ENCODE measurements at regions of chr19 and their contacts with region 1.

Region 1: DNA sequence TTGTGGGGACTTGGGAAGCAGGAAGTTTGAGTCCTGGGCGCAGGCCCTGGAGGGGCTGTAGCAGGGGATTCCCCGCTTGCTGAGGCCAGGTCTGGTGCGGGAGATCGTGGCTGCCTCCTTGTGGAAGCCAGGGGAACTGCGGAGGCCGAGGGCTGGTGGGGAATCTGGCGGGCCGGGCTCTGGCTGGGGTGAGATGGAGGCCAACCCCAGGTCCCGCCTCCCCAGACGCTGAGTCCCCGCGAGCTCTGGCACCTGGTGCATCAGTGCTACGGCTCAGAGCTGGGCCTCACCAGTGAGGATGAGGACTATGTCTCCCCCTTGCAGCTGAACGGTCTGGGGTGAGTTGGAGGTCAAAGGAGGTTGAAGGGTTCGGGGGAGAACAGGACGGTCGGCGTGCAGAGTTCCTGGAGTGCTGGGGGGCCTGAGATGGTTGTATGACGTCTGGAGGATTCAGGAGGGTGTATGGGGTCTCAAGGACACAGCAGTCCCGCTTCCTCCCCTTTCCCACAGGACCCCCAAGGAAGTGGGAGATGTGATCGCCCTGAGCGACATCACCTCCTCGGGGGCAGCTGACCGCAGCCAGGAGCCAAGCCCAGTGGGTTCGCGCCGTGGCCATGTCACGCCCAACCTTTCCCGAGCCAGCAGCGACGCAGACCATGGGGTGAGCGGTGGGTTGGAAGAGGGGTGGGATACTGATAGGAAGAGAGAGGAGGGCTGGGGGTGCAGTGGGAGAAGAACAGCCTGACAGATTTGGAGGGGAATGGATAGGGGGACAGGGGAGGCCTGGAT is 13.1 kb downstream of the GRAMD1A start:
- DNase-seq: peak; percentile 74 to 91 (median 82)
- ATAC-seq: peak; percentile 82
- H3K4me3 ChIP-seq: peak overlapping the region; percentile 48
- H3K4me3 Mint-ChIP-seq: peak overlapping the region; percentile 87
- H3K27ac ChIP-seq: peak overlapping the region; percentile 79 to 87
- H3K27ac Mint-ChIP-seq: peak overlapping the region; percentile 91
- H3K4me1 ChIP-seq: peaks cover 82% of the 10 kb centered on the region
- H3K4me1 Mint-ChIP-seq: peaks cover 73% of the 10 kb centered on the region
- H3K27me3 ChIP-seq: no peaks in the 10 kb centered on the region
- H3K27me3 Mint-ChIP-seq: no peaks in the 10 kb centered on the region
- CTCF ChIP-seq: peak; percentile 94

Region 2: GRCh38 chr19:34733826-34734600 is 279.2 kb before region 1 on chr19 and contains the start of gene ZNF181:
- CTCF ChIA-PET with region 1: no interaction called
- POLR2A ChIA-PET with region 1: interaction called, 5 read pairs
- intact Hi-C with region 1: loop called in 1 of 2 experiments (anchors 5 kb)
- DNase-seq: peak; percentile 64 to 90 (median 74)
- ATAC-seq: peak; percentile 84
- H3K4me3 ChIP-seq: peak within 1 kb of the TSS; percentile 85
- H3K4me3 Mint-ChIP-seq: peak within 1 kb of the TSS; percentile 96
- H3K27ac ChIP-seq: peak within 1 kb of the TSS; percentile 91
- H3K27ac Mint-ChIP-seq: peak within 1 kb of the TSS; percentile 92
- H3K4me1 ChIP-seq: peaks cover 28% of the 10 kb centered on the region
- H3K4me1 Mint-ChIP-seq: peaks cover 34% of the 10 kb centered on the region
- H3K27me3 ChIP-seq: no peaks in the 10 kb centered on the region
- H3K27me3 Mint-ChIP-seq: no peaks in the 10 kb centered on the region
- CTCF ChIP-seq: no peak
- total RNA-seq, gene ZNF181: 2.0 to 2.9 TPM

Region 3: DNA sequence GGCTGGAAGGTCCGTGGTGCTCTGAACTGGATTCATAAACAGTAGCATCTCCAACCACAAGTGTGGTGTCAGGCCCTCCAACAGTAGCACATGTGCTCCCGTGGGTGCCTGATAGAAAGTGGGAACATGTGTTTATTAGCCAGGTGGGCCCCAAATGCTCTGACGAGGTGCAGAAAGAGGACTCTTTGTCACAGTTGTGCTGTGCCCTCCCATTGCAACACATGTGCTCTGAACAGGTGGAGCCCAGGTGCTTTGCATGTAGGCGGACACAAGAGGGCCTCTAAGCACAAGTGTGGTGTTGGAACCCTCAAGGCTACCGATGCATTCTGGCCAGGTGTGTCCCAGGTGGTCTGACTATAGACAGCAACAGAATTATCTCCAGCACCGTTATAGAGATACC is 161.9 kb before region 1 on chr19:
- CTCF ChIA-PET with region 1: no interaction called
- POLR2A ChIA-PET with region 1: no interaction called
- intact Hi-C with region 1: loop called in 1 of 2 experiments (anchors 5 kb)
- DNase-seq: peak in 3 of 14 experiments; percentile 6 to 34 (median 8)
- ATAC-seq: no peak
- H3K4me3 ChIP-seq: no peak overlapping the region
- H3K4me3 Mint-ChIP-seq: no peak overlapping the region
- H3K27ac ChIP-seq: no peak overlapping the region
- H3K27ac Mint-ChIP-seq: peak overlapping the region; percentile 24
- H3K4me1 ChIP-seq: peaks cover 16% of the 10 kb centered on the region
- H3K4me1 Mint-ChIP-seq: peaks cover 47% of the 10 kb centered on the region
- H3K27me3 ChIP-seq: no peaks in the 10 kb centered on the region
- H3K27me3 Mint-ChIP-seq: no peaks in the 10 kb centered on the region
- CTCF ChIP-seq: no peak

Region 4: GRCh38 chr19:34943861-34944573 is 69.2 kb before region 1 on chr19:
- CTCF ChIA-PET with region 1: no interaction called
- POLR2A ChIA-PET with region 1: no interaction called
- intact Hi-C with region 1: no loop called
- DNase-seq: no peak
- ATAC-seq: no peak
- H3K4me3 ChIP-seq: no peak overlapping the region
- H3K4me3 Mint-ChIP-seq: no peak overlapping the region
- H3K27ac ChIP-seq: no peak overlapping the region
- H3K27ac Mint-ChIP-seq: no peak overlapping the region
- H3K4me1 ChIP-seq: no peaks in the 10 kb centered on the region
- H3K4me1 Mint-ChIP-seq: no peaks in the 10 kb centered on the region
- H3K27me3 ChIP-seq: no peaks in the 10 kb centered on the region
- H3K27me3 Mint-ChIP-seq: no peaks in the 10 kb centered on the region
- CTCF ChIP-seq: no peak

Region 5: DNA sequence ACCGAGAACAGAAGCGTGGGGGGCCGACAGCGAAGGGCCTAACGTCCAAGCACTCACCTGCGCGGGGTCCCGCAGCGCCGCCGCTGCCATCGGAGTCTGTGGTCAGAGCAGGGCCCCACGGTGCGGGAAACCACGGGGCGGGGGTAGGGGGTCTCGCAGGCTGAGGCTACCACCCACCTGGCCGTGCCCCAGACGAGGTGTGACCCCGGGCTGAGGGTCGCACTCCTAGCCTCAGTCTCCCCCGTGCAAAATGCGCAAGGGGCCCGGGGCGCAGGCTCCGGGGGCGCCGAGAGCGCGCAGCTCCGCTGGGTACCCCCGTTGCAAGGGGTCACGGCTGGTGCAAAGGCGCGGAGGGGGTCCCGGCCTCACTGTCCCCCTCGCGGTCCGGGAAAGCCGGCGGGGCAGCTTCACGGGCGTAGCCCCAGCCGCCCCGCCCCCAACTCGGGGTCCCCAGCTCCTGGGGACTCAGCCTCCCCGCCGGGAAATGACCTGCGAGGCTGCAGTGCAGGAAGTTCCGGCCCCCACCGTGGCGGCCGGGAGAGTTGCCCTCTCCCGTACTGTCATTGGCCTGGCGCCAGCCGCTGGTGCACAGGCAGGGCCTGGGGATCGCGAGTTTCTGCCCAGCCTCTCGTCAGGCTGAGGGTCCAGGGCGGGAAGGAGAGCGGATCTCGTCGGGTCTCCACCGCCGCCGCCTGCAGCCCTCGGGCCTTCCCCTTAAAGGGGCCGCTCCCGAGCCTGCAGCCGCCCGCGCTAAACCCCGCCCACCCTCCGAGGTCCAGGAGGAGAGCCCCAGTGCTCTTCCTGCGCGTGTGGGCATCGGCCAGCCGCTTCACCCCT is 49.4 kb before region 1 on chr19 and contains the start of gene ZNF792:
- CTCF ChIA-PET with region 1: no interaction called
- POLR2A ChIA-PET with region 1: interaction called, 46 read pairs
- intact Hi-C with region 1: no loop called
- DNase-seq: peak in 13 of 14 experiments; percentile 9 to 65 (median 46)
- ATAC-seq: peak; percentile 63
- H3K4me3 ChIP-seq: peak within 1 kb of the TSS; percentile 93
- H3K4me3 Mint-ChIP-seq: peak within 1 kb of the TSS; percentile 96
- H3K27ac ChIP-seq: peak within 1 kb of the TSS; percentile 46 to 57
- H3K27ac Mint-ChIP-seq: peak within 1 kb of the TSS; percentile 89
- H3K4me1 ChIP-seq: peaks cover 36% of the 10 kb centered on the region
- H3K4me1 Mint-ChIP-seq: peaks cover 29% of the 10 kb centered on the region
- H3K27me3 ChIP-seq: no peaks in the 10 kb centered on the region
- H3K27me3 Mint-ChIP-seq: no peaks in the 10 kb centered on the region
- CTCF ChIP-seq: no peak
- total RNA-seq, gene ZNF792: 6.8 to 8.9 TPM

Region 6: GRCh38 chr19:34999498-35000341 is 13.5 kb before region 1 on chr19 and contains the start of gene GRAMD1A:
- CTCF ChIA-PET with region 1: interaction called, 31 read pairs
- POLR2A ChIA-PET with region 1: interaction called, 205 read pairs
- intact Hi-C with region 1: loop called in 1 of 2 experiments (anchors 1 kb)
- DNase-seq: peak; percentile 50 to 85 (median 74)
- ATAC-seq: peak; percentile 28
- H3K4me3 ChIP-seq: peak within 1 kb of the TSS; percentile 59
- H3K4me3 Mint-ChIP-seq: peak within 1 kb of the TSS; percentile 99
- H3K27ac ChIP-seq: peak within 1 kb of the TSS; percentile 79 to 92
- H3K27ac Mint-ChIP-seq: peak within 1 kb of the TSS; percentile 98
- H3K4me1 ChIP-seq: peaks cover 89% of the 10 kb centered on the region
- H3K4me1 Mint-ChIP-seq: peaks cover 72% of the 10 kb centered on the region
- H3K27me3 ChIP-seq: no peaks in the 10 kb centered on the region
- H3K27me3 Mint-ChIP-seq: no peaks in the 10 kb centered on the region
- CTCF ChIP-seq: no peak
- total RNA-seq, gene GRAMD1A: 221 to 229 TPM

Region 7: GRCh38 chr19:35347171-35347929 is 334.1 kb after region 1 on chr19 and contains the start of gene FFAR1:
- CTCF ChIA-PET with region 1: no interaction called
- POLR2A ChIA-PET with region 1: no interaction called
- intact Hi-C with region 1: no loop called
- DNase-seq: peak in 10 of 14 experiments; percentile 14 to 83 (median 40)
- ATAC-seq: peak; percentile 78
- H3K4me3 ChIP-seq: no peak within 1 kb of the TSS
- H3K4me3 Mint-ChIP-seq: peak within 1 kb of the TSS; percentile 71
- H3K27ac ChIP-seq: no peak within 1 kb of the TSS
- H3K27ac Mint-ChIP-seq: peak within 1 kb of the TSS; percentile 75
- H3K4me1 ChIP-seq: peaks cover 30% of the 10 kb centered on the region
- H3K4me1 Mint-ChIP-seq: peaks cover 26% of the 10 kb centered on the region
- H3K27me3 ChIP-seq: peaks cover 0 to 2% of the 10 kb centered on the region in 2 experiments
- H3K27me3 Mint-ChIP-seq: peaks cover 9% of the 10 kb centered on the region
- CTCF ChIP-seq: no peak
- total RNA-seq, gene FFAR1: not detected

Region 8: DNA sequence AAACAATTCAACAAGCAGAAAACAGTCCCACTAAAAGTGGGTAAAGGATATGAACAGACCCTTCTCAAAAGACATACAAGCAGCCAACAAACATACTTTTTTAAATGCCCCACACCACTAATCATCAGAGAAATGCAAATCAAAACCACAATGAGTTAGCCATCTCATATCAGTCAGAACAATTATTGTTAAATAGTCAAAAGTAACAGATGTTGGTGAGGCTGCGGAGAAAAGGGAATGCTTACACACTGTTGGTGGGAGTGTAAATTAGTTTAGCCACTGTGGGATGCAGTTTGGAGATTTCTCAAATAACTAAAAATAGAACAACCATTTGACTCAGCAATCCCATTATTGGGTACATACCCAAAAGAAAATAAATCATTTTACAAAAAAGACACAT is 1551.2 kb after region 1 on chr19:
- CTCF ChIA-PET with region 1: no interaction called
- POLR2A ChIA-PET with region 1: no interaction called
- intact Hi-C with region 1: no loop called
- DNase-seq: no peak
- ATAC-seq: no peak
- H3K4me3 ChIP-seq: no peak overlapping the region
- H3K4me3 Mint-ChIP-seq: no peak overlapping the region
- H3K27ac ChIP-seq: no peak overlapping the region
- H3K27ac Mint-ChIP-seq: no peak overlapping the region
- H3K4me1 ChIP-seq: no peaks in the 10 kb centered on the region
- H3K4me1 Mint-ChIP-seq: peaks cover 18% of the 10 kb centered on the region
- H3K27me3 ChIP-seq: no peaks in the 10 kb centered on the region
- H3K27me3 Mint-ChIP-seq: no peaks in the 10 kb centered on the region
- CTCF ChIP-seq: no peak